Esophagus muscularis mucosa (tissue), 4 donors: ENCODE measurements at regions of chr3 and their contacts with region 1.

Region 1: GRCh38 chr3:4722103-4722502 is 229.0 kb downstream of the ITPR1 start:
- DNase-seq: no peak
- H3K4me3 ChIP-seq: no peak overlapping the region
- H3K27ac ChIP-seq: peak overlapping the region; percentile 74 to 82 (median 78)
- H3K4me1 ChIP-seq: peaks cover 44 to 73% (median 66%) of the 10 kb centered on the region in 4 donors
- H3K27me3 ChIP-seq: no peaks in the 10 kb centered on the region
- CTCF ChIP-seq: peak; percentile 43 to 47 (median 44)
- EP300 ChIP-seq: no peak
- POLR2A ChIP-seq: no peak

Region 2: GRCh38 chr3:4615750-4616149 is 106.4 kb before region 1 on chr3:
- intact Hi-C with region 1: no loop called
- DNase-seq: no peak
- H3K4me3 ChIP-seq: no peak overlapping the region
- H3K27ac ChIP-seq: no peak overlapping the region
- H3K4me1 ChIP-seq: peaks cover 0 to 19% (median 3%) of the 10 kb centered on the region in 4 donors
- H3K27me3 ChIP-seq: no peaks in the 10 kb centered on the region
- CTCF ChIP-seq: no peak
- EP300 ChIP-seq: no peak
- POLR2A ChIP-seq: no peak

Region 3: GRCh38 chr3:4693620-4694019 is 28.5 kb before region 1 on chr3:
- intact Hi-C with region 1: no loop called
- DNase-seq: no peak
- H3K4me3 ChIP-seq: no peak overlapping the region
- H3K27ac ChIP-seq: no peak overlapping the region
- H3K4me1 ChIP-seq: peaks cover 0 to 10% (median 0%) of the 10 kb centered on the region in 4 donors
- H3K27me3 ChIP-seq: no peaks in the 10 kb centered on the region
- CTCF ChIP-seq: no peak
- EP300 ChIP-seq: no peak
- POLR2A ChIP-seq: no peak

Region 4: GRCh38 chr3:4776980-4777581 is 55.0 kb after region 1 on chr3:
- intact Hi-C with region 1: loop called (anchors 10 kb)
- DNase-seq: no peak
- H3K4me3 ChIP-seq: no peak overlapping the region
- H3K27ac ChIP-seq: peak overlapping the region in 3 of 4 donors; percentile 19 to 40 (median 32)
- H3K4me1 ChIP-seq: peaks cover 30 to 32% (median 31%) of the 10 kb centered on the region in 4 donors
- H3K27me3 ChIP-seq: no peaks in the 10 kb centered on the region
- CTCF ChIP-seq: no peak
- EP300 ChIP-seq: no peak
- POLR2A ChIP-seq: no peak